ENCODE measurements at regions of chr12 and their contacts with region 1.

Region 1: DNA sequence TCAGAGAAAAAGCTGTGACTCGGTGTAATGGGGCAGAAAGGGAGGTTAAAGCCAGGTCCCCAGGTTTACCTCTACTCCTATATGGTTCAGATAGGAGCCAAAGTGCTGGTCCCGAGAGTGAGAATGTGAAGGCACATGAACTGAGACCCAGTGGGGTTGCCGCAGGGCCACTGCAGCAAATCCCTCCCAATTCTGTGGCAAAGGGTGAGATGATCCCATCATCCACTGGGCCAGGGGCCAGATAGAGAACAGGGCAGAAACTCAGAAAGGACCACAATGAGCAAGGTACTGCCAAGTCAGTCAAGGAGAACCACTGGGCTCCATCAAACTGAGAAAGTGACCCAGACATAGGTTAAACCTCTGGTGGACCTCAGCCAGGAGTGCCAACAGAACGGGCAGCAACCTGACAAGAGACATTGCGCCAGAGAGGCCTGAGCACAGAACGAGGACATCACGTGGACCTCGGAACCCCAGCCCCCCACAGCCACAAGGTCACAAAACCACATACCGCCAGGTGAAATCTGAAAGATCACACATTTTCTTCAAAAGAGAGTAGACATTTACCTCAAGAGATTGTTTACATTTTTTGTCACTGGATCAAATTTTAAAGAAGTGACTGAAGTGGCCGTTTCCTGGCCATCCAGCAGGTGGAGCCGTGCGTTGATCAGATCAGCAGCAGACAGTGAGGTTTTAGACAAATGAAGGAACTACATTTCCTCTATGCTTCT is 20.5 kb upstream of the ITPR2 start:
- DNase-seq: peak in 9 of 10 donors; percentile 48 to 79 (median 73)
- H3K4me3 ChIP-seq: peak overlapping the region in 3 of 59 donors; percentile 7 to 19 (median 11)
- H3K27ac ChIP-seq: no peak overlapping the region
- H3K27me3 ChIP-seq: no peaks in the 10 kb centered on the region
- CTCF ChIP-seq: peak; percentile 58 to 96 (median 88)

Region 2: GRCh38 chr12:26629864-26630263 is 223.6 kb before region 1 on chr12:
- intact Hi-C with region 1: no loop called
- DNase-seq: peak in 3 of 10 donors; percentile 33 to 51 (median 41)
- H3K4me3 ChIP-seq: peak overlapping the region in 15 of 59 donors; percentile 3 to 49 (median 27)
- H3K27ac ChIP-seq: peak overlapping the region in 41 of 59 donors; percentile 2 to 80 (median 50)
- H3K27me3 ChIP-seq: no peaks in the 10 kb centered on the region
- CTCF ChIP-seq: peak in 55 of 56 donors; percentile 38 to 79 (median 61)

Region 3: GRCh38 chr12:26746121-26746714 is 107.2 kb before region 1 on chr12:
- intact Hi-C with region 1: no loop called
- DNase-seq: no peak
- H3K4me3 ChIP-seq: no peak overlapping the region
- H3K27ac ChIP-seq: no peak overlapping the region
- H3K27me3 ChIP-seq: no peaks in the 10 kb centered on the region
- CTCF ChIP-seq: no peak

Region 4: GRCh38 chr12:27305673-27306456 is 452.4 kb after region 1 on chr12:
- intact Hi-C with region 1: loop called in 1 of 2 experiments (anchors 10 kb)
- DNase-seq: no peak
- H3K4me3 ChIP-seq: no peak overlapping the region
- H3K27ac ChIP-seq: peak overlapping the region in 3 of 59 donors; percentile 3 to 14 (median 12)
- H3K27me3 ChIP-seq: no peaks in the 10 kb centered on the region
- CTCF ChIP-seq: peak; percentile 43 to 89 (median 66)